SK-N-SH (cell line): ENCODE measurements at regions of chr17 and their contacts with region 1.

Region 1: DNA sequence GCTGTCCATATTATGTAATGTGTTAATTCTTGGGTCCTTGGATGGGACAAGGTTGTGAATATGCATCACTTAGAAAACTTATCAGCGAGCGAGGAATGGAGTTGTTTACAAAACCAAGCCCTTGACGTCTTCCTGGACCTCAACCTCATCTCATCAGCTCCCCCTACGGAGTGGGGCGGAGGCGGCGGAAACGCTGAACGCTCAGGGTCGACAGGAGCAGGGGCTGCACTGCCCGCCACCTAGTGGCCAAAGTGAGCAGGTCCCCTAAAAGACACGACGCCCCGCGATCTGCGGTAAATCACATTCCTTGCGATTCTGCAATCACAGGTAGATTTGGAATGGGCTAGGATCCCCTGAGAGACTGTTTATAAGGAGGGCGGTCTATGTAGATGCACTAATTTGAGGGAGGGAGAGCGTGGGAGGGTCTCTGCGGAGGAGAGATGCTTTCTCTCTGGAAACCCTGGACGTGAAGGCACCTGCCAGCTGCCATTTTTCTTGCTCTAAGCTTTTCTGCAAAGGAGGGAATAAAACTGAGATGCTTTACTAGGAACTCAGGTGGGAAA is 5.4 kb upstream of the ICAM2 start:
- DNase-seq: peak; percentile 89
- H3K4me3 ChIP-seq: peak overlapping the region; percentile 18 to 19; a peak in 2 of 4 replicates
- H3K27ac ChIP-seq: no peak overlapping the region
- H3K4me1 ChIP-seq: no peaks in the 10 kb centered on the region
- H3K27me3 ChIP-seq: no peaks in the 10 kb centered on the region
- CTCF ChIP-seq: peak; percentile 99
- EP300 ChIP-seq: no peak
- RAD21 ChIP-seq: peak; percentile 76

Region 2: GRCh38 chr17:63503334-63503692 is 522.5 kb before region 1 on chr17:
- CTCF ChIA-PET with region 1: no interaction called
- POLR2A ChIA-PET with region 1: no interaction called
- DNase-seq: no peak
- H3K4me3 ChIP-seq: no peak overlapping the region
- H3K27ac ChIP-seq: no peak overlapping the region
- H3K4me1 ChIP-seq: peaks cover 3 to 4% of the 10 kb centered on the region in 2 experiments; a peak in 1 of 4 replicates
- H3K27me3 ChIP-seq: peaks cover 19% of the 10 kb centered on the region; the same call in 1 of the 2 replicates
- CTCF ChIP-seq: no peak
- EP300 ChIP-seq: no peak
- RAD21 ChIP-seq: no peak

Region 3: DNA sequence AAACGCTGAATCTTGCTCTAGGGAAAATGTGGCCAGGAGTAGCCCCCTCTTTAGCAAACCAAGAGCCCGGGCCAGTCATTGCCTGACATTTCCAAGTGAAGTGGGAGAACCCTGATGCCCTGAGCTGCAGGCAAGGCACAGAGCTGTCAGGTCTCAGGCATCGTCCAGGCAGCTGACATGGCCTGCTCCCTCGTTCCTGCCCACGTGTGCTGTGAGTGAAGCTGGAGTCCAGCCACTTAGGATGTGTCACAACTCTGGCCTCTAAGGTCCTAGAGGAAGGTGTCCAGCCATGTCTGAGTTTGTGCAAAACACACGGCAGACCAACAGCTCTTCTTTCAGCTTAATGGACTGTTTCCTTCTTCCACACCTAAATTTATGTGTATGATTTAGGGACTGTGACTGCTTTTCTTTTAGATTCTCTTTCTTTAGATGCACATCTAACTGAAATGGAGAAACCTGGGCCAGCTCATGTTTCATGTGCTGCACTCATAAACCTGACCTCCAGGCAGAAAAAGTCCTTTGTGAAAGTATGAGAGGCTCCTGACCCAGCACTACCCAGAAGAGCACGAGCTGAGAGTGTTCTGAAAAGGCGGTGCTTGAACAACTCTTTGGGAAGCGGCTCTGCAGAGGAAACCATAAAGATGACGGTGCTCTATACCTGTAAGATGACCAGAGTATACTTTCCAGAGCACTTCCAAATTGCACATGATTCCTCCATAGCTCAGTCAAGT is 311.1 kb before region 1 on chr17:
- CTCF ChIA-PET with region 1: no interaction called
- POLR2A ChIA-PET with region 1: no interaction called
- DNase-seq: no peak
- H3K4me3 ChIP-seq: no peak overlapping the region
- H3K27ac ChIP-seq: no peak overlapping the region
- H3K4me1 ChIP-seq: no peaks in the 10 kb centered on the region
- H3K27me3 ChIP-seq: no peaks in the 10 kb centered on the region
- CTCF ChIP-seq: no peak
- EP300 ChIP-seq: no peak
- RAD21 ChIP-seq: no peak

Region 4: DNA sequence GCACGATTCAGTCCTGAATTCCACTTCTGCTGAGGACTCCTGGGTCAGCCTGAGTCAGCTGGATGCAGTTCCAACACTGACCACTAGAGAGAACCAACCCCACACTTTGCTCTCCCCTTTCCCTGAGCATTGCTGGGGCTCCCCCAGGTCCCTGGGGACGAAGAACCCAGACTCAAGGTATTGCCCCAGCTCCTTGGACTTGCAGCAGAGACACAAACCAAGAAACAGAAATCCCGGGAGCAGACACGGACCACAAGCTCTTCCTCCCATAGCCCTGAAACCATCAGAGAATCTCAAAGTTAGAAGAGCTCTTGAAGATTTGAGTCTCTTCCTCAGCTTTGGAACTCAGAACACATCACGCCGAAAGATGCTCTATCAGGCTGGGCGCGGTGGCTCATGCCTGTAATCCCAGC is 106.5 kb before region 1 on chr17:
- CTCF ChIA-PET with region 1: interaction called, 214 read pairs
- POLR2A ChIA-PET with region 1: no interaction called
- DNase-seq: peak; percentile 89
- H3K4me3 ChIP-seq: no peak overlapping the region
- H3K27ac ChIP-seq: no peak overlapping the region
- H3K4me1 ChIP-seq: no peaks in the 10 kb centered on the region
- H3K27me3 ChIP-seq: peaks cover 31% of the 10 kb centered on the region
- CTCF ChIP-seq: peak; percentile 96
- EP300 ChIP-seq: no peak
- RAD21 ChIP-seq: peak; percentile 92

Region 5: DNA sequence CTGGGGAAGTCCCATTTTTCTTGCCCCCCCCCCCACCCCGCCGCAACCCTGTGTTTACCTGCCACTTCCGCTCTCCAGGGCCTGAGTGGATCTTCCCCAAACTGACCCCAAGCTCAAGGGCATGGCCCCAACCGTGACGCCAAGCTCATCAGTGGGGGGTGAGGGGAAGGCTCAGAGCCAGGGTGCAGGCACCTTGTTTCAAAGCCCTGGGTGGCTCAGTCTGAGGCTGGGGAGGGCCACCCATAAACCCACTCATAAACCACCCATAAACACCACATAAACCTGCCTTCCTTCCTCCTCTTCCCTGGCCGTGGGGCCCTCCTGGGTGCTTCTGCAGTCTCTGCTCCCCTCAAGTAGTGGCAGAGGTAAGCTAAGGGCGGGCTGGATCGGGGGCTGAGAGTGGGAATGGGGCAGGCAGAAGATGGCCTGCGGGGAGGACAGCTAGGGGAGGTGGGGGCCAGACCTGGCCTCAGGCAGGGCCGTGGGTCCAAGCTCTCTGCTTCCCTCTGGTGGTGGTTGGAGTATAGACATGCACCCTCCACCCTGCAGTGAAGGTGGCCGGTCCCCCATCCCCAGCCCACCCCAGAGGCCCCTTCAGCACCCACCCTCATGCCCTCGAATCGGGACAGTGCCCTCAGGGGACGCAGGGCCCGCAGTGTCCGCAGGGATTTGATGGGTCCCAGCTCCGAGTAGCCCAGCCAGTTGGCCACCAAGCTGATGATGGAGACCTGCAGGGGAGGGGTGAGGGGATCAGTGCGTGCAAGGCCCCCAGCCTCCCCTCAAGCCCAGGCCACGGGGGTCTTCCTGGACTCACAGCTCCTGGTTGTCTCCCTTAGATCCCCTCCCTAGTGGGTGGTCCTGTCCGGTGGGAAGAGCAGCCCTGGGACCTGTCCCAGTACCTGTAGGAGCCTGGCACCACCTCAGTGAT is 79.1 kb before region 1 on chr17:
- CTCF ChIA-PET with region 1: interaction called, 16 read pairs
- POLR2A ChIA-PET with region 1: no interaction called
- DNase-seq: peak; percentile 91
- H3K4me3 ChIP-seq: no peak overlapping the region
- H3K27ac ChIP-seq: no peak overlapping the region
- H3K4me1 ChIP-seq: no peaks in the 10 kb centered on the region
- H3K27me3 ChIP-seq: no peaks in the 10 kb centered on the region; the same call in 1 of the 2 replicates
- CTCF ChIP-seq: peak; percentile 77
- EP300 ChIP-seq: no peak
- RAD21 ChIP-seq: peak; percentile 50

Region 6: GRCh38 chr17:63998050-63998720 is 27.6 kb before region 1 on chr17 and contains the start of gene PRR29:
- CTCF ChIA-PET with region 1: interaction called, 28 read pairs
- POLR2A ChIA-PET with region 1: no interaction called
- DNase-seq: peak; percentile 100
- H3K4me3 ChIP-seq: peak within 1 kb of the TSS; percentile 71 to 94
- H3K27ac ChIP-seq: peak within 1 kb of the TSS in 1 of 2 experiments; percentile 50; a peak in 1 of 4 replicates
- H3K4me1 ChIP-seq: peaks cover 0 to 13% of the 10 kb centered on the region in 2 experiments; a peak in 2 of 4 replicates
- H3K27me3 ChIP-seq: peaks cover 23% of the 10 kb centered on the region
- CTCF ChIP-seq: no peak
- EP300 ChIP-seq: no peak
- RAD21 ChIP-seq: no peak
- polyA plus RNA-seq, gene PRR29: 2.5 and 2.7 TPM in 2 replicates

Region 7: GRCh38 chr17:64063766-64064224 is 38.0 kb after region 1 on chr17:
- CTCF ChIA-PET with region 1: interaction called, 266 read pairs
- POLR2A ChIA-PET with region 1: no interaction called
- DNase-seq: peak; percentile 72
- H3K4me3 ChIP-seq: no peak overlapping the region
- H3K27ac ChIP-seq: no peak overlapping the region
- H3K4me1 ChIP-seq: no peaks in the 10 kb centered on the region
- H3K27me3 ChIP-seq: no peaks in the 10 kb centered on the region
- CTCF ChIP-seq: peak; percentile 49
- EP300 ChIP-seq: no peak
- RAD21 ChIP-seq: peak; percentile 66

Region 8: GRCh38 chr17:64129764-64130558 is 104.1 kb after region 1 on chr17 and contains the start of gene ERN1:
- CTCF ChIA-PET with region 1: interaction called, 810 read pairs
- POLR2A ChIA-PET with region 1: interaction called, 10 read pairs
- DNase-seq: peak; percentile 99
- H3K4me3 ChIP-seq: peak within 1 kb of the TSS; percentile 72 to 82
- H3K27ac ChIP-seq: peak within 1 kb of the TSS; percentile 62 to 68
- H3K4me1 ChIP-seq: peaks cover 13 to 18% of the 10 kb centered on the region in 2 experiments; a peak in 3 of 4 replicates
- H3K27me3 ChIP-seq: no peaks in the 10 kb centered on the region
- CTCF ChIP-seq: 0 out of 2 replicates have a peak, but pooled peaks have one; percentile 8
- EP300 ChIP-seq: no peak
- RAD21 ChIP-seq: 0 out of 2 replicates have a peak, but pooled peaks have one; percentile 23
- polyA plus RNA-seq, gene ERN1: 6.9 and 7.3 TPM in 2 replicates